Activated CD4-positive, alpha-beta memory T cell treated with anti-CD3 and anti-CD28 coated beads for 36 hours (primary cell): ENCODE measurements at regions of chr4 and their contacts with region 1.

Region 1: DNA sequence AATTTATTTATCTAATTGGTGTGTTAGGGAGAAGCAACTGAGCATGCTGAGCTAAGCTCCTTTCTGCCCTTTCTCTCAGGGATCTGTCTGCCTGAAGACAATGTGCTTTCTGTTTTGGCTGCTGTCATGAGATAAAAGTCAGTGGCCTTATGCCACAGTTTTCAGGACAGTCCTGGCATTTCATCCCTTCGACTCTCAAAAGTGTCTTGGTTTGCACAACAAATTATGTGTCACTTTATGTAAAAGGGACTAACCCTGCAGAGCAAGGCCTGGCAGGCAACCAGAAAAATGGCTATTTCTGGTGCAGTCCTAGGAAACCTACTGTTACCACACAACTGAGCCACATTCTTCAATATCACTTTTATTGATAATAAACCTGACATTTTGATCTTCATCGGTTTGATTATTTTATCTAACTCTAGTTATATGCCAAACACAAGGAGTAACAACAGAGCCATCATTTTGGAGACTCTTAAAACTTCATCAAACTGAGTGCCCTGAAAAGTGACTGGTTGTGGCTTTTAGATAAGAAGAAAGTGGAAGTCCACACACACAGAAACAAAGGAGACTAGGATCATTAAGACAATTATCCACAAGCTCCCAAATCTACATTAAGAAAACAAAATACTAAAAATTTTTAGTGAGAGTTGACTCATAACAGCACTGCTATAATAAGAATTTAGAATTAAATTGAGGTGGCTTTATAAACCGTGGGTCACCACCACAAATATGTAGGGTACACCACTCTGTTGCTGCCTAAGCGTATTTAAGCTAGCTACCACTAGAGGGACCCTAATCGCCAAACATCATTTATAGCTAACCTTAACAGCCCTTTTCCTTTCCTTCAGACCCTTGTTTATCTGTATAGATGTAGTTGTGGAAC is 95.9 kb upstream of the PTPN13 start:
- DNase-seq: no peak
- H3K4me3 Mint-ChIP-seq: no peak overlapping the region
- H3K27ac Mint-ChIP-seq: no peak overlapping the region
- H3K4me1 Mint-ChIP-seq: no peaks in the 10 kb centered on the region
- H3K27me3 Mint-ChIP-seq: peaks cover 1% of the 10 kb centered on the region

Region 2: GRCh38 chr4:86279293-86279960 is 218.8 kb before region 1 on chr4:
- CTCF ChIA-PET with region 1: no interaction called
- POLR2A ChIA-PET with region 1: no interaction called
- intact Hi-C with region 1: no loop called
- DNase-seq: no peak
- H3K4me3 Mint-ChIP-seq: no peak overlapping the region
- H3K27ac Mint-ChIP-seq: no peak overlapping the region
- H3K4me1 Mint-ChIP-seq: no peaks in the 10 kb centered on the region
- H3K27me3 Mint-ChIP-seq: no peaks in the 10 kb centered on the region

Region 3: DNA sequence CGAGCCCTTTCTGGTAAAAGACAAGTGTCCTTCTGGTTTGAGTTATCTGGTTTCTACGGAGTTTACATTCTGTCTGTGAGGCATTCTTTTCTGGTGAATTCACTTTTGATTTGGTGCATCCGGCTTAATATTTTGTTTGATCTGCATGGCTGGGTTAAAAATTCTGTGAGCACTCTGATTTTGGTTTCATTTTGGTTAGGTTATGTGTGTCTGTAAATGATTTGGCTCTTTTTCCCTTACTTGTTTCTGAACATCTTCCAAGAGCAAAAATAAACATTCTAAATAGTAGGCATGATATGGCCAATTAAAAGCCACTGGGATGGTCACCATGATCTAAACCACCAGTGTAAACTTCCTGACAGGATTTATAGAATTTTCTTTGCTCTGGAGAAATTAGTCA is 10.2 kb after region 1 on chr4:
- CTCF ChIA-PET with region 1: interaction called, 14 read pairs
- POLR2A ChIA-PET with region 1: no interaction called
- intact Hi-C with region 1: no loop called
- DNase-seq: no peak
- H3K4me3 Mint-ChIP-seq: no peak overlapping the region
- H3K27ac Mint-ChIP-seq: no peak overlapping the region
- H3K4me1 Mint-ChIP-seq: peaks cover 4% of the 10 kb centered on the region
- H3K27me3 Mint-ChIP-seq: peaks cover 5% of the 10 kb centered on the region

Region 4: GRCh38 chr4:86593688-86594558 is 95.7 kb after region 1 on chr4 and contains the start of gene PTPN13:
- CTCF ChIA-PET with region 1: interaction called, 5 read pairs
- POLR2A ChIA-PET with region 1: no interaction called
- intact Hi-C with region 1: loop called (anchors 5 kb)
- DNase-seq: peak; percentile 84
- H3K4me3 Mint-ChIP-seq: peak within 1 kb of the TSS; percentile 73
- H3K27ac Mint-ChIP-seq: peak within 1 kb of the TSS; percentile 47
- H3K4me1 Mint-ChIP-seq: peaks cover 15% of the 10 kb centered on the region
- H3K27me3 Mint-ChIP-seq: peaks cover 39% of the 10 kb centered on the region
- total RNA-seq, gene PTPN13: 2.7 to 3.2 TPM

Region 5: DNA sequence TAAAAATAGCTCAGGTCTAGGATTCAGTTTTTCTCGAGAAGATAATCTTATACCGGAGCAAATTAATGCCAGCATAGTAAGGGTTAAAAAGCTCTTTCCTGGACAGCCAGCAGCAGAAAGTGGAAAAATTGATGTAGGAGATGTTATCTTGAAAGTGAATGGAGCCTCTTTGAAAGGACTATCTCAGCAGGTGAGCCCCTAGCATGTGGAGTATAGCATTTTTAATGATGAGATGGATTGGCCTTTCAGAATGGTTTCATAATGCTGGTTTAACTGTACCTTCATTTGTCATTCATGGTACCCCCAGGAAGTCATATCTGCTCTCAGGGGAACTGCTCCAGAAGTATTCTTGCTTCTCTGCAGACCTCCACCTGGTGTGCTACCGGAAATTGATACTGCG is 271.6 kb after region 1 on chr4:
- CTCF ChIA-PET with region 1: no interaction called
- POLR2A ChIA-PET with region 1: no interaction called
- intact Hi-C with region 1: no loop called
- DNase-seq: no peak
- H3K4me3 Mint-ChIP-seq: no peak overlapping the region
- H3K27ac Mint-ChIP-seq: no peak overlapping the region
- H3K4me1 Mint-ChIP-seq: no peaks in the 10 kb centered on the region
- H3K27me3 Mint-ChIP-seq: peaks cover 4% of the 10 kb centered on the region

Region 6: DNA sequence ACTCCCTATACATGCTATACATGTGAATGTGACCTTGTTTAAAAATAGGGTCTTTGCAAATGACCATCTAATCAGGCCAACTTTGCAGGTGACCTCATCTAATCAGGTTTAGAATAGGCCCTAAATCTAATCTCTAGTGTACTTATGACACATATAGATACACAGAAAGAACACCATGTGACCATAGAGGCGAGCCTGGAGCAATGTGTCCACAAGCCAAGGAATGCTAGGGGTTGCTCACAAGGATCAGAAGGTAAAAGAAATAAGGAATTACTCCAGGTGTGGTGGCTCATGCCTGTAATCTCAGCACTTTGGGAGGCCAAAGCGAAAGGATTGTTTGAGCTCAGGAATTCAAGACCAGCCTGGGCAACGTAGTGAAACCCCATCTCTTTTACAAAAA is 403.6 kb after region 1 on chr4:
- CTCF ChIA-PET with region 1: interaction called, 23 read pairs
- POLR2A ChIA-PET with region 1: interaction called, 3 read pairs
- intact Hi-C with region 1: no loop called
- DNase-seq: no peak
- H3K4me3 Mint-ChIP-seq: no peak overlapping the region
- H3K27ac Mint-ChIP-seq: no peak overlapping the region
- H3K4me1 Mint-ChIP-seq: no peaks in the 10 kb centered on the region
- H3K27me3 Mint-ChIP-seq: peaks cover 6% of the 10 kb centered on the region

Region 7: DNA sequence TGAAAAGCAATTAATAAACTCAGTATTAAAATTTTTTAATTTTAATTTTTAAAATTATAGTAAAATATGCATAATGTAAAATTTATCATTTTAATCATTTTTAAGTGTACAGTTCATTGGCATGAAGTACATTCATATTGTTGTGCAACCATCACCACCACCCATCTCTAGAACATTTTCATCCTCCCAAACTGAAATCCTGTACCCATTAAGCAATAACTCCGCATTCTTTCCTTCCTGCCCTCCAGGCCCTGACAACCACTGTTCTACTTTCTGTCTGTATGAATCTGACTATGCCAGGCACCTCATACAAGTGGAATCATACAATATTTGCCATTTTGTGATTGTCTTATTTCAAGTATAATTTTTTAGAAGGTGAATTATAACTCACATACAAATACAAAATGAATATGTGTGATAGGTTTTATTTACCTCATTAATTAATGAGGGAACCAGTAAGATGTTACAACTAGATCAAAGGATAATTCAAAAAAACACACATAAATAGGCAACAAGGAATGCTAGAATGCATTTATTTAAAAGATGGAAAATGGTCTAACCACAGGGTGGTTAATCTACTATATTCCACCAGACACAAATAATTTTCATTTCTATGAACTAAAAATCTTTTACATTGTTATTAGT is 423.5 kb after region 1 on chr4:
- CTCF ChIA-PET with region 1: interaction called, 11 read pairs
- POLR2A ChIA-PET with region 1: no interaction called
- intact Hi-C with region 1: no loop called
- DNase-seq: no peak
- H3K4me3 Mint-ChIP-seq: no peak overlapping the region
- H3K27ac Mint-ChIP-seq: no peak overlapping the region
- H3K4me1 Mint-ChIP-seq: peaks cover 6% of the 10 kb centered on the region
- H3K27me3 Mint-ChIP-seq: no peaks in the 10 kb centered on the region